Activated naive CD4-positive, alpha-beta T cell treated with anti-CD3 and anti-CD28 coated beads for 36 hours (primary cell): ENCODE measurements at regions of chr10 and their contacts with region 1.

Region 1: DNA sequence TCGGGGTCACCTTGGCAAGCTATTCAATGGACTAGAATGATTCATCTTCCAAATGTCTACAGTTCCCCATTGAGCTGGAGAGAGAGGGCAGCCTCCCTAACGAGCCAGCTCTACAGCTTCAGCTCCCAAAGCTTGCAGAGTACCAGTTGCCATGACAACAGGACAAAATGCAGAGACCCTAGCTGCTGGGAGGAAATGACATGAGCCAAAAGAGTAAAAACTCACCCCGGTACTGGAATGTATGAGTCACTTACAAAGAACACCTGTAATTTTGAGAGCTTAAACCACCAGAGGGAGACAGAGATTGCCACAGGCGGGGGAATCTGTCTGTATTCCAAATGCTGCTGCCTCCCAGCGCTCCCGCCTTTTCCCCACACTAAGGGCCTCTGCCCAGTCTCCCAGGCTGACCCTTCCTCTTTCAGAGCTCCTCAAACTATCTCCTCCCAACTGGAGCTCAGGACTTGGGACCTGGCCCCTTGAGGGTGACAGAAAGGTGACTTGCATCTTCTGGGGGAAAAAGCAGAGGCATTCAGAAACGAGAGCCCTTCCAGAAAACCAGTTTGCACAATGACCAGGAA is 95.5 kb downstream of the CUL2 start:
- DNase-seq: peak; percentile 78
- H3K4me3 Mint-ChIP-seq: no peak overlapping the region
- H3K27ac Mint-ChIP-seq: peak overlapping the region; percentile 70
- H3K4me1 Mint-ChIP-seq: peaks cover 18% of the 10 kb centered on the region
- H3K27me3 Mint-ChIP-seq: no peaks in the 10 kb centered on the region

Region 2: GRCh38 chr10:34816501-34817002 is 178.1 kb before region 1 on chr10:
- CTCF ChIA-PET with region 1: no interaction called
- intact Hi-C with region 1: no loop called
- DNase-seq: no peak
- H3K4me3 Mint-ChIP-seq: peak overlapping the region; percentile 16
- H3K27ac Mint-ChIP-seq: no peak overlapping the region
- H3K4me1 Mint-ChIP-seq: peaks cover 6% of the 10 kb centered on the region
- H3K27me3 Mint-ChIP-seq: peaks cover 43% of the 10 kb centered on the region

Region 3: GRCh38 chr10:35027567-35027966 is 32.9 kb after region 1 on chr10:
- CTCF ChIA-PET with region 1: interaction called, 41 read pairs
- intact Hi-C with region 1: no loop called
- DNase-seq: no peak
- H3K4me3 Mint-ChIP-seq: no peak overlapping the region
- H3K27ac Mint-ChIP-seq: no peak overlapping the region
- H3K4me1 Mint-ChIP-seq: no peaks in the 10 kb centered on the region
- H3K27me3 Mint-ChIP-seq: no peaks in the 10 kb centered on the region

Region 4: GRCh38 chr10:35218339-35218955 is 223.8 kb after region 1 on chr10:
- CTCF ChIA-PET with region 1: interaction called, 19 read pairs
- intact Hi-C with region 1: loop called (anchors 1 kb)
- DNase-seq: peak; percentile 96
- H3K4me3 Mint-ChIP-seq: peak overlapping the region; percentile 47
- H3K27ac Mint-ChIP-seq: peak overlapping the region; percentile 74
- H3K4me1 Mint-ChIP-seq: peaks cover 32% of the 10 kb centered on the region
- H3K27me3 Mint-ChIP-seq: no peaks in the 10 kb centered on the region

Region 5: DNA sequence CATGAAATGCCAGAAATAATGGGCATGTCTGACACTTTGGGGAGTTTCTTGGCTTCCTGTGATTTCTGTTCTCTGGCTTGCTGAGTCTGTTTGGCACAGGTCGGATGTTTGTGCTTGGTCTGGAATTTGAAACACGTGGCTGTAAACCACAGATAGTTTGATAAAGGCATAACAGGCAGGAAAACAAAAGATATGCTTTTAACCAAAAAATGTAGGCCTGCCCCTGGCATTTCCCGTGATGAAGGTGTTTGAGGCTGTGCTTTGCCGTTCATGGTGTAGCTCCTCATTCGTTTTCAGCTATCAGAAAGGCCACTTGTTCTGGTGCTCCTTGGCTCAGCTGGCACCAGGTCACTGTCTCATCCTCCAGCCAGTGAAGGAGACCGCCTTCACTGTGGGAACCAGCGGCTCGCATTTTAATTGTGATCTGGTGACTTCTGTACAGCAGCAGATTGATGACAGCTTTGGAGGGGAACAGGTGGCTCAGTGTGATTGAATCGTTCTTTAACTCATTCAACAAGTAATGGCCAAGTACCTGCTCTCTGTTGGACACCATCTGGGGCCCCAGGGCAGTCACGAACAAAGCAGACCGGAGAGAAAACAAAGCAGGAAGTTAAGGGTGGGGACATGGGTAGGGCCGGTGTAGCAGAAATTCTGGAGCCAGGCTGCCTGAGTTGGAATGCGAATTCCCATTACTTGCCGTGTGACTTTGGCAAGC is 453.2 kb after region 1 on chr10:
- CTCF ChIA-PET with region 1: no interaction called
- intact Hi-C with region 1: loop called (anchors 10 kb)
- DNase-seq: peak; percentile 47
- H3K4me3 Mint-ChIP-seq: peak overlapping the region; percentile 52
- H3K27ac Mint-ChIP-seq: peak overlapping the region; percentile 80
- H3K4me1 Mint-ChIP-seq: peaks cover 72% of the 10 kb centered on the region
- H3K27me3 Mint-ChIP-seq: no peaks in the 10 kb centered on the region

Region 6: GRCh38 chr10:35642027-35642792 is 647.6 kb after region 1 on chr10 and contains the start of gene FZD8:
- CTCF ChIA-PET with region 1: interaction called, 4 read pairs
- intact Hi-C with region 1: loop called (anchors 2 kb)
- DNase-seq: peak; percentile 75
- H3K4me3 Mint-ChIP-seq: peak within 1 kb of the TSS; percentile 78
- H3K27ac Mint-ChIP-seq: no peak within 1 kb of the TSS
- H3K4me1 Mint-ChIP-seq: peaks cover 19% of the 10 kb centered on the region
- H3K27me3 Mint-ChIP-seq: peaks cover 41% of the 10 kb centered on the region
- total RNA-seq, gene FZD8: 0.15 to 0.19 TPM